Activated naive CD4-positive, alpha-beta T cell treated with anti-CD3 and anti-CD28 coated beads for 36 hours (primary cell): ENCODE measurements at regions of chr1 and their contacts with region 1.

Region 1: DNA sequence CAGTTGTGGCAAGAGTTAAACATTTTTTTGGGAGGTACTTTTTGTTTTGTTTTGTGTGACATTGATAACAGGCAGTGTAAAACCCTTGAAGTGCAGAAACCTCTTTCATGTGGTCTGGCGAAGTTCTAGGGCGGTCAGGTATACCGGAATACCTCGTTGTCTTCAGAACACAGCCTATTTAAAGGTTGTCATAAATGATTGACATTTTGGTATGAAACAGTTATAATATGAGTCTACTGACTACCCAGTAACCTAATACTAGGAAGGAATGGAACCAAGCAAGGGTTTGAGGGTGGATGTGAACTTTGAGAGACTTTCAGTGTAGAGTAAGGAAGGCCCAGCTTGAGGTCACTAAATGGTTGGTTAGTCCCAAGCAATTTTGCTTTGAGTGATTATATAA is 40.5 kb downstream of the PATJ start:
- DNase-seq: peak; percentile 82
- H3K4me3 Mint-ChIP-seq: no peak overlapping the region
- H3K27ac Mint-ChIP-seq: peak overlapping the region; percentile 39
- H3K4me1 Mint-ChIP-seq: peaks cover 39% of the 10 kb centered on the region
- H3K27me3 Mint-ChIP-seq: no peaks in the 10 kb centered on the region

Region 2: GRCh38 chr1:61757945-61758344 is 24.8 kb before region 1 on chr1:
- CTCF ChIA-PET with region 1: no interaction called
- intact Hi-C with region 1: loop called (anchors 2 kb)
- DNase-seq: no peak
- H3K4me3 Mint-ChIP-seq: no peak overlapping the region
- H3K27ac Mint-ChIP-seq: no peak overlapping the region
- H3K4me1 Mint-ChIP-seq: peaks cover 8% of the 10 kb centered on the region
- H3K27me3 Mint-ChIP-seq: no peaks in the 10 kb centered on the region